Heart right ventricle (tissue), 16 donors: ENCODE measurements at regions of chr5 and their contacts with region 1.

Region 1: DNA sequence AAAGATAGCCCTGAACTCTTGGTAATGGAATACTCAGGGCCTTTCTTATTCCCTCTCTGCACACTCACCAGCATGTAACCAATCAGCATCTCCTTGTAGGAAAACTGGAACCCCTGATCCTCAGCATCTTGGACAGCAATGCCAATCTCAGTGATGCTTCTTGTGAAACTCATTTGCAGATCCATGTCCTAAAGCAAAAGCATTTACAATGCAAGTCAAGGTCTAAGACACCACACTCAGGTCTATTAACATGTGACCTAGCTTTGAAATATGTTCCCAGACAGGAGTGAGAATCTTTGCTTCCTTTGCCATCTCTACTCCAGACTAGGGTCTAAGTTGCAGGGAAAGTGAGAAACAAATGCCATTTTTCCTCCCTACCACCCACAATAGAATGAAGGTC is 38.2 kb downstream of the MROH2B start:
- DNase-seq: no peak
- ATAC-seq: no peak
- H3K4me3 ChIP-seq: no peak overlapping the region
- H3K27ac ChIP-seq: no peak overlapping the region
- H3K4me1 ChIP-seq: no peaks in the 10 kb centered on the region
- H3K27me3 ChIP-seq: no peaks in the 10 kb centered on the region
- CTCF ChIP-seq: no peak

Region 2: DNA sequence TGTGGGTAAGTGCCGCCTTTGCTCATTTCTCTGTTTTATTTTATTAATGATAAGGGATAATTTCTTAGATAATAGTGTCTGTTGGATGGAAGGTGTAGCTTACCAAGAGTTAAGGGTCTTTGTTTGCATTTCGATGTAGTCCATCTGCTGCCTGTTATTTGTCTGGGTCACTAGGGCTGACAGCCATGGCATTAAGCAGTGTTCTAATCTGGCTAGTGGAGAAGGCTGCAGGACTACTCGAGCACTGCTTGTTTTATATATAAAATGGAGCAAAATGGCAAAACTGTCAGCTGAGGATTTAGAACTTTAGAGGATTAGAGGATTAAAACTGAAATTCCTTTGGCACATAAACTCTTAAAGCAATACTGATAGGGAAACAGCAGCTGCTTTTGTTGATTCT is 56.1 kb before region 1 on chr5:
- intact Hi-C with region 1: no loop called
- DNase-seq: no peak
- ATAC-seq: no peak
- H3K4me3 ChIP-seq: no peak overlapping the region
- H3K27ac ChIP-seq: no peak overlapping the region
- H3K4me1 ChIP-seq: no peaks in the 10 kb centered on the region
- H3K27me3 ChIP-seq: no peaks in the 10 kb centered on the region
- CTCF ChIP-seq: no peak

Region 3: DNA sequence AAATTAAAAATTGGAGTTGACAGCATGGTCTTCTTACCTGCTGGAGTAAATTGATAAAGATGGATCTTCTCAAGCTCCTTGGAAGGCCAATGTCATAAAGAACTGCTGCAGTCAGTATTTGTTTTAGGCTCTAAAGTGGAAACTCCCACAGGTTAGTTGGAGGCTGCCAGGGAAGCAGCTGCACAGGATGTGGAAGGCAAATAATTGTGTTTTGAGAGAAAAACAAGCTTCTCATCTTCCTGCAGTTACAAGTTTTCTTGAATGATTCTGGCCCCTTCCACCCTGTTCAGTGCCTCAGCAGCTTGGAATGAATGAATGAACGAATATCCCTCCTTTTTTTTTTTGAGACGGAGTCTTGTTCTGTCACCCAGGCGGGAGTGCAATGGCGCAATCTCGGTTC is 24.3 kb after region 1 on chr5:
- intact Hi-C with region 1: loop called in 1 of 10 experiments (anchors 1 kb)
- DNase-seq: no peak
- ATAC-seq: peak in 6 of 8 donors; percentile 51 to 69 (median 58)
- H3K4me3 ChIP-seq: no peak overlapping the region
- H3K27ac ChIP-seq: peak overlapping the region in 1 of 10 donors; percentile 47
- H3K4me1 ChIP-seq: peaks cover 0 to 8% (median 0%) of the 10 kb centered on the region in 9 donors
- H3K27me3 ChIP-seq: no peaks in the 10 kb centered on the region
- CTCF ChIP-seq: no peak

Region 4: GRCh38 chr5:41559184-41559583 is 526.2 kb after region 1 on chr5:
- intact Hi-C with region 1: loop called in 1 of 10 experiments (anchors 10 kb)
- DNase-seq: no peak
- ATAC-seq: peak in 1 of 8 donors; percentile 33
- H3K4me3 ChIP-seq: no peak overlapping the region
- H3K27ac ChIP-seq: no peak overlapping the region
- H3K4me1 ChIP-seq: no peaks in the 10 kb centered on the region
- H3K27me3 ChIP-seq: no peaks in the 10 kb centered on the region
- CTCF ChIP-seq: no peak